K562 (cell line): ENCODE measurements at regions of chr2 and their contacts with region 1.

Region 1: DNA sequence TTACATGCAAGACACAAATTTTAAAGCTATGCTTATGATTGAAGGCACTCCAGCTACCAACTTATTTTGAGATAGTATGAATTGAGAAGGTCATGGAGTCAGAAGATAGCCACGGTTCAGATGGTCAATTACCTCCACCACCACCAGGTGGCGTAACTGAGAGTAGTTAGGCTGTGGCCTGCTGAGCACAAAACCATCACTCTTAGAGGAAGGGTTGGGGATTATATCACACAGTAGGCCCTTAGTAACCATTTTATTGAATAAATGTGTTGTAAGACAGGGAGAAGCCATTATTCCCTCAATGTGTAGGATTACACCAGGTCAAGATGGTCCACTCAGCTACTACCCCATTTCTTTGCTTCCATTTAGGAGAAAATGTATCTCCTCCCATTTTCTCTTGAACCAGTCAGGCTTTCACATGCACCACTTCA is 18.8 kb downstream of the KLHL41 start:
- DNase-seq: peak; percentile 71 to 88 (median 81)
- ATAC-seq: peak; percentile 99
- H3K4me3 ChIP-seq: no peak overlapping the region
- H3K27ac ChIP-seq: no peak overlapping the region
- H3K4me1 ChIP-seq: no peaks in the 10 kb centered on the region
- H3K27me3 ChIP-seq: no peaks in the 10 kb centered on the region
- CTCF ChIP-seq: peak; percentile 88 to 94 (median 91)
- EP300 ChIP-seq: no peak
- POLR2A ChIP-seq: no peak
- RAD21 ChIP-seq: peak; percentile 74 to 92

Region 2: GRCh38 chr2:168673265-168674189 is 854.8 kb before region 1 on chr2:
- CTCF ChIA-PET with region 1: no interaction called
- POLR2A ChIA-PET with region 1: no interaction called
- in situ Hi-C with region 1: no loop called
- intact Hi-C with region 1: no loop called
- DNase-seq: no peak
- ATAC-seq: no peak
- H3K4me3 ChIP-seq: no peak overlapping the region
- H3K27ac ChIP-seq: no peak overlapping the region
- H3K4me1 ChIP-seq: peaks cover 0 to 4% of the 10 kb centered on the region in 2 experiments; a peak in 1 of 5 replicates
- H3K27me3 ChIP-seq: no peaks in the 10 kb centered on the region
- CTCF ChIP-seq: no peak
- EP300 ChIP-seq: no peak
- POLR2A ChIP-seq: no peak
- RAD21 ChIP-seq: no peak

Region 3: DNA sequence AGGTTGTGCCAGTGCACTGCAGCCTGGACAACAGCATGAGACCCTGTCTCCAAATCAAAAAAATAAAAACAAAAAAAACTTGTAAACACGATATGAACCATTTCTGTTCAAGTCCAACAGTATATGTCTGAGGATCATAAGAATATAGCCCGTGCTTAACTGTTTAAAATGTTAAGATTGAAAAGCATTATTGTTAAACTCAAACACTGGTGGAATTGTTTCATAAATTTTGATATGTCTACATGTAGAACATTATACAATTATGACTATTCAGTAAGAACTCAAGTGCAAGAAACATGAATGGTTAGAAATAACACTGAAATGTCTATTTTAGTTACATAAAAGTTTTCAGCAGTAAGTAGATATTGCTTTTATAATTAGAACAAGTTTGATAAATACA is 85.6 kb after region 1 on chr2:
- CTCF ChIA-PET with region 1: no interaction called
- POLR2A ChIA-PET with region 1: no interaction called
- in situ Hi-C with region 1: no loop called
- intact Hi-C with region 1: loop called (anchors 5 kb)
- DNase-seq: no peak
- ATAC-seq: no peak
- H3K4me3 ChIP-seq: no peak overlapping the region
- H3K27ac ChIP-seq: no peak overlapping the region
- H3K4me1 ChIP-seq: no peaks in the 10 kb centered on the region
- H3K27me3 ChIP-seq: no peaks in the 10 kb centered on the region
- CTCF ChIP-seq: no peak
- EP300 ChIP-seq: no peak
- POLR2A ChIP-seq: no peak
- RAD21 ChIP-seq: no peak

Region 4: GRCh38 chr2:169694113-169694903 is 166.0 kb after region 1 on chr2 and contains the starts of genes CFAP210 and PHOSPHO2:
- CTCF ChIA-PET with region 1: no interaction called
- POLR2A ChIA-PET with region 1: no interaction called
- in situ Hi-C with region 1: no loop called
- intact Hi-C with region 1: no loop called
- DNase-seq: peak; percentile 95 to 100 (median 96)
- ATAC-seq: peak; percentile 98
- H3K4me3 ChIP-seq: peak within 1 kb of the TSS; percentile 76
- H3K27ac ChIP-seq: peak within 1 kb of the TSS; percentile 88
- H3K4me1 ChIP-seq: peaks cover 9 to 14% of the 10 kb centered on the region in 2 experiments
- H3K27me3 ChIP-seq: no peaks in the 10 kb centered on the region
- CTCF ChIP-seq: peak in 1 of 3 experiments; percentile 4; a peak in 2 of 6 replicates
- EP300 ChIP-seq: no peak
- POLR2A ChIP-seq: peak; percentile 94
- RAD21 ChIP-seq: 0 out of 4 replicates have a peak, but pooled peaks of 1 of the 2 experiments have one; percentile 15
- polyA plus RNA-seq, gene CFAP210: 1.2 to 1.3 TPM
- polyA plus RNA-seq, gene PHOSPHO2: 7.8 to 8.9 TPM

Region 5: GRCh38 chr2:169790581-169790980 is 262.3 kb after region 1 on chr2:
- CTCF ChIA-PET with region 1: interaction called, 7 read pairs
- POLR2A ChIA-PET with region 1: no interaction called
- in situ Hi-C with region 1: no loop called
- intact Hi-C with region 1: loop called (anchors 5 kb)
- DNase-seq: no peak
- ATAC-seq: no peak
- H3K4me3 ChIP-seq: no peak overlapping the region
- H3K27ac ChIP-seq: no peak overlapping the region
- H3K4me1 ChIP-seq: peaks cover 0 to 6% of the 10 kb centered on the region in 2 experiments; a peak in 2 of 5 replicates
- H3K27me3 ChIP-seq: no peaks in the 10 kb centered on the region
- CTCF ChIP-seq: no peak
- EP300 ChIP-seq: no peak
- POLR2A ChIP-seq: no peak
- RAD21 ChIP-seq: no peak